ENCODE measurements at regions of chr16 and their contacts with region 1.

Region 1: DNA sequence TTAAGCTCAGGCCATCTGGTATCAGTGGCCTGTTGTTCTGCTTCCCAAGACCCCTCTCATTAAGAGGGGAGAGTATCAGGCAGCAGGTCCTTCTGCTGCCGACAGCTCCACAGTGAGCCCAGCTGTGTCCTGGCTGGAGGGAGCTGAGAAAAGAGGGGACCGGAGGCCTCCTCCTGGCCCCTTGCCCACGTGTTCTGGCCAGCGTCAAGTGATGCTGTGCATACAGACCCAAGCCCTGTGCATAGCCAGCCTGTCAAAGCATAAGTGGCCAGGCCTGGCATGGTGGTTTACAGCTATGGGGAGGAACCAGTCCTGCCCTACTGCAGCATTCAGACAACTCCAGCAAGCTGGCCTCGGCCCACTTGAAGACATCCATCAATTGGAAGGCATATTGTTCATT is 48.0 kb downstream of the ABCC6 start:
- DNase-seq: no peak
- H3K4me3 ChIP-seq: no peak overlapping the region
- H3K4me3 Mint-ChIP-seq: no peak overlapping the region
- H3K27ac Mint-ChIP-seq: no peak overlapping the region
- H3K4me1 ChIP-seq: no peaks in the 10 kb centered on the region
- H3K4me1 Mint-ChIP-seq: no peaks in the 10 kb centered on the region
- H3K27me3 ChIP-seq: no peaks in the 10 kb centered on the region
- H3K27me3 Mint-ChIP-seq: no peaks in the 10 kb centered on the region
- CTCF ChIP-seq: no peak

Region 2: GRCh38 chr16:16150117-16150877 is 25.0 kb before region 1 on chr16:
- CTCF ChIA-PET with region 1: interaction called, 11 read pairs
- POLR2A ChIA-PET with region 1: no interaction called
- intact Hi-C with region 1: no loop called
- DNase-seq: no peak
- H3K4me3 ChIP-seq: no peak overlapping the region
- H3K4me3 Mint-ChIP-seq: no peak overlapping the region
- H3K27ac Mint-ChIP-seq: no peak overlapping the region
- H3K4me1 ChIP-seq: no peaks in the 10 kb centered on the region
- H3K4me1 Mint-ChIP-seq: no peaks in the 10 kb centered on the region
- H3K27me3 ChIP-seq: no peaks in the 10 kb centered on the region
- H3K27me3 Mint-ChIP-seq: no peaks in the 10 kb centered on the region
- CTCF ChIP-seq: no peak

Region 3: DNA sequence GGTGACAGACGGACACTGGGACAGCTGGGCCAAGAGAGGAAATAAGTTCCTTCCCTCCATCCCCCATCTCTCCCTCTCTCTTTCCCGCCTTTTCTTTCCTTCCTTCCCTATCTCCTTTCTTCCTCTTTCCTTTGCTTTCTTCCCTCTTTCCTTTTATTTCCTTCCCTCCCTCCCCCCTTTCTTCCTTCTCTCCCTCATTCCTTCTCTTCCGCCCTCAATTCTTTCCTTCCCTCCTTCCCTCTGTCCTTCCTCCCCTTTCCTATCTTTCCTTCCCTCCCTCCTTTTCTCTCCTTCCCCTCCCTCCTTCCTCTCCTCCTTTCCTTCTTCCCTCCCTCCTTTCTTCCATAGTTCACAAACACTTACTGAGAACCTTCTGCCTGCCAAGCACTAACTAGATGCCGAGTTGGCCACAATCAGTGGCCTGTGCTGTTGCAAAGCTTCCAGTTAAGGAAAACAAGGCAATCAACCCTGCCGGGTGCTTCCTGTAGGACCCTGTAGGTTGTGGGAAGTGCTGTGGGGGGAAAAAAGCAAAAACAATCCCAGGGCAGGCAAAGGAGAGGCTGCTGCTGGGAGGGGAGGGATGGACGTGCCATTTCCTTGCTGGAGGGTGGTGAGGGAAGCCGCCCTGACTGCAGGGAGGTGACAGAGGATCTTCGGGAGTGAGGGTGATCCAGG is 16.3 kb after region 1 on chr16:
- CTCF ChIA-PET with region 1: no interaction called
- POLR2A ChIA-PET with region 1: no interaction called
- intact Hi-C with region 1: no loop called
- DNase-seq: no peak
- H3K4me3 ChIP-seq: no peak overlapping the region
- H3K4me3 Mint-ChIP-seq: no peak overlapping the region
- H3K27ac Mint-ChIP-seq: no peak overlapping the region
- H3K4me1 ChIP-seq: no peaks in the 10 kb centered on the region
- H3K4me1 Mint-ChIP-seq: no peaks in the 10 kb centered on the region
- H3K27me3 ChIP-seq: no peaks in the 10 kb centered on the region
- H3K27me3 Mint-ChIP-seq: no peaks in the 10 kb centered on the region
- CTCF ChIP-seq: no peak

Measured in Caco-2 (cell line).